ENCODE measurements at regions of chr20 and their contacts with region 1.

Region 1: DNA sequence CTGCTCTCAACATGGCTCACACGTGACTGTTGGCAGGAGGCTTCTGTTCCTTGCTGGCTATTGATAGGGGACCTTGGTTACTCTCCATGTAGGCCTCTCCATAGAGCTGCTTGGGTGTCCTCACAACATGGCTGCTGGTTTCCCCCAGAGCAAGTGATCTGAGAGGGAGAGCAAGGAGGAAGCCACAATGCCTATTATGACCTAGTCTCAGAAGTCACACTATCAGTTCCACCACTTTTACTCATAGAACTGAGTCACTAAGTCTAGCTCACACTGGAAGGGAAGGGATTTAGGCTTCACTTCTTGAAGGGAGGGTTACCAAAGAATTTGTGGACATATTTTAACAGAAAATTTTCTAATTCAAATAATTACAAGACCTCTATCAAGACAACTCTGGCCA is 8.7 kb upstream of the NOP56 start:
- DNase-seq: no peak
- H3K4me3 ChIP-seq: no peak overlapping the region
- H3K27ac ChIP-seq: no peak overlapping the region
- H3K4me1 ChIP-seq: no peaks in the 10 kb centered on the region
- H3K27me3 ChIP-seq: no peaks in the 10 kb centered on the region
- CTCF ChIP-seq: no peak
- POLR2A ChIP-seq: no peak

Region 2: GRCh38 chr20:2524709-2525506 is 118.8 kb before region 1 on chr20:
- intact Hi-C with region 1: loop called (anchors 5 kb)
- DNase-seq: peak; percentile 32 to 35
- H3K4me3 ChIP-seq: peak overlapping the region; percentile 21 to 71 (median 61)
- H3K27ac ChIP-seq: peak overlapping the region; percentile 39 to 97 (median 84)
- H3K4me1 ChIP-seq: peaks cover 4 to 6% of the 10 kb centered on the region in 2 donors
- H3K27me3 ChIP-seq: no peaks in the 10 kb centered on the region
- CTCF ChIP-seq: peak in 1 of 6 experiments; percentile 8
- POLR2A ChIP-seq: no peak

Region 3: GRCh38 chr20:2619961-2620595 is 23.6 kb before region 1 on chr20:
- intact Hi-C with region 1: no loop called
- DNase-seq: no peak
- H3K4me3 ChIP-seq: no peak overlapping the region
- H3K27ac ChIP-seq: no peak overlapping the region
- H3K4me1 ChIP-seq: no peaks in the 10 kb centered on the region
- H3K27me3 ChIP-seq: no peaks in the 10 kb centered on the region
- CTCF ChIP-seq: no peak
- POLR2A ChIP-seq: no peak

Measured in thyroid gland (tissue), 4 donors.